CD14-positive monocyte (primary cell): ENCODE measurements at regions of chr12 and their contacts with region 1.

Region 1: DNA sequence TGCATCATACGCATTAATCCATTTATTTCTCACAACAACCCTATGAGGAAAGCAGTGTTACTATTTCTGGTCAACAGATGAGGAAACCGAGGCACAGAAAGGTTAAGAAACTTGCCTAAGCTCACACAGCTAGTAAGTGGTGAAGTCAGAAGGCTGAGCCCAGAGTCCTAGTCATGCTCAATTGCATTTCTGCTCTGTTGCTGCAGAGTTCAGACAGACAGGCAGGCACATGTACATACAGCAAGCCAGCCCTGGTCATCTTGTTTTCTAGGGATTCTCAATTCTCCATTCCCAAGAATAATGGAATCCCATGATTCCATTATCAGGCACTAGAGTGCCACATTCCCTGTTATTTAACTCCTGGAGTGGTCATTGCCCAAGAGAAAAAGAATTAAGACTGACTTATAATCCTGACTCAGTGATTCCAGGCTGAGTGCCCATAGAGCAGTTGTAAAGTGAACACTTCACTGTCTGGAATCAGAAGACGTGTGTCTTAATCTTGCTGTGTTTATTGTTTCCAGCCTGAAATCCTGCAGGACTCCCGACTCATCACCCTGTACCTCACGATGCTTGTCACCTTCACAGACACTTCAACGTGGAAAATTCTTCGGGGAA is 10.7 kb downstream of the UBE3B start:
- DNase-seq: no peak
- H3K4me3 ChIP-seq: no peak overlapping the region
- H3K4me3 Mint-ChIP-seq: no peak overlapping the region
- H3K27ac ChIP-seq: no peak overlapping the region
- H3K27ac Mint-ChIP-seq: no peak overlapping the region
- H3K4me1 ChIP-seq: no peaks in the 10 kb centered on the region
- H3K4me1 Mint-ChIP-seq: no peaks in the 10 kb centered on the region
- H3K27me3 ChIP-seq: no peaks in the 10 kb centered on the region
- H3K27me3 Mint-ChIP-seq: peaks cover 0 to 2% (median 0%) of the 10 kb centered on the region in 3 donors
- CTCF ChIP-seq: no peak

Region 2: GRCh38 chr12:109573029-109573913 is 85.1 kb after region 1 on chr12 and contains the starts of genes MMAB and MVK:
- intact Hi-C with region 1: loop called in 1 of 2 experiments (anchors 10 kb)
- DNase-seq: peak; percentile 99 to 100 (median 99)
- H3K4me3 ChIP-seq: peak within 1 kb of the TSS; percentile 61 to 85 (median 83)
- H3K4me3 Mint-ChIP-seq: peak within 1 kb of the TSS; percentile 84 to 92
- H3K27ac ChIP-seq: peak within 1 kb of the TSS; percentile 74 to 87
- H3K27ac Mint-ChIP-seq: peak within 1 kb of the TSS; percentile 89 to 98 (median 97)
- H3K4me1 ChIP-seq: peaks cover 14 to 20% of the 10 kb centered on the region in 2 donors
- H3K4me1 Mint-ChIP-seq: peaks cover 16% of the 10 kb centered on the region
- H3K27me3 ChIP-seq: no peaks in the 10 kb centered on the region
- H3K27me3 Mint-ChIP-seq: no peaks in the 10 kb centered on the region
- CTCF ChIP-seq: no peak
- polyA plus RNA-seq, gene MMAB: 5.0 to 15.6 (median 12.4) TPM
- polyA plus RNA-seq, gene MVK: 1.1 to 3.8 (median 1.6) TPM

Region 3: DNA sequence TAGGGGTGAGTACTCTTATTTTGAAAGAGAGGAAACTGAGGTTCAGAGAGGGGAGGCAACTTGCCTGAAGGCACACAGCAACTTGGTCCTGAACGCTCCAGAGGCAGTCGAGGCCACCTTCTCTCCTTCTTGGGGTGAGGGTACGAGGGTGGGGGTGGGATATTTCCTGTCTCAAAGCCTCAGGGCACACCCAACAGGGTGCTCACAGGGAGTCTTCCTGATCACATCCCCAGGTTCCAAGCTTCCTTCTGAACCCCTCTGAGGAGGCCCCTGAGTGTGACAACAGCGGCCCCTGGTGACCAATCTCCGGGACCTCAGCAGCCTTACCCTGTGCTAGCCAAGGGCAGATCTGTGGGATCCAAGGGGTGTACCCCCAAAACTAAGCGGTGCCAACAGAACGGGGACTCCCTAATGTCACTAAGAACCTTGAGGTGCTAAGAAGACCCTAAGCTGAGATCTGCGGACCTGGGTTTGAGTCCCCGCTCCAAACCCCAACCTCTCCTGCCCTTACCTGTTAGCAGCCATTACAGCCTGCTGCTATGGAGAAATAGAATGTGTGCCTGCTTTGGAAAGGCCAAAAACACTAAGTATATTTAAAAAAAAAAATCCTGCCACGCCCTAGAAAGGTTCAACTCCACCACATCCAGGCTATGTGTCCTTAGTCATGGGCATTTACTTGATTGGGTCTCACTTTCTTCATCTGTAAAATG is 287.2 kb after region 1 on chr12:
- intact Hi-C with region 1: no loop called
- DNase-seq: peak; percentile 47 to 61 (median 59)
- H3K4me3 ChIP-seq: no peak overlapping the region
- H3K4me3 Mint-ChIP-seq: no peak overlapping the region
- H3K27ac ChIP-seq: no peak overlapping the region
- H3K27ac Mint-ChIP-seq: no peak overlapping the region
- H3K4me1 ChIP-seq: no peaks in the 10 kb centered on the region
- H3K4me1 Mint-ChIP-seq: peaks cover 16% of the 10 kb centered on the region
- H3K27me3 ChIP-seq: no peaks in the 10 kb centered on the region
- H3K27me3 Mint-ChIP-seq: peaks cover 0 to 8% (median 7%) of the 10 kb centered on the region in 3 donors
- CTCF ChIP-seq: peak; percentile 87

Region 4: DNA sequence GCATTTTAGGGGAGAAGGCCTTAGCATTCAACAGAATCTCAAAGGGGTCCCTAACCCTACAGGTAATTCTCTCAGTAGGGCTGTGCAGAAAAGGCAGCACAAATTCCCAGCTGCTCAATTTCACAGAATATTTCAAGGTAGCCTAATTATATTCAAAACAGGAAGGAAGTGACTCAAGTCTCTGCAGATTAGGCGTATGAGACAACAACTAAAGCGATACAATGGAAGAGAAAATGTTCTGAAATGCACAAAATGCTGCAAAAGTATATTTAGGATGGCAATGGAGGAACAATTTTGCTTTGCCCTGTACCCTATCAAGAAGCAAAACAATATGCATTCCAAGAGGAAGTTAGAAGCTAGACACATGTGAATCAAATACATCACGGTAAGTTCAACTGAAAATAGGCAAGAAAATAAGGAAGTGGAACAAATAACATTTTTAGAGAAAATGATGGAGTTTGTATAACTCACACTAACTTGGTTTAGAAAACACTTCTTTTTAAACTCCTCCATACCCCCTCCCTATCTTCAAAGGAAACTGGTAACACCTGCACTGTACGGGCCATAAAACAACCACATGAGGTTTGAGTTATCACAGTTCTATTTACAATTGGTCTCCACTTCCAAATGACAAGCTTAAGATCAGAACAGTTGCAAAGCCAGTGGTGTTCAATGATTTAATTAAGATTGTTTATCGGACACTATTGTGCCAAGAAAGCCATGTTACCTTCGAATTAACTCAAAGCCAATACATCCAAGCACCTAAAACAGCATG is 506.4 kb after region 1 on chr12:
- intact Hi-C with region 1: no loop called
- DNase-seq: peak; percentile 37 to 61 (median 53)
- H3K4me3 ChIP-seq: peak overlapping the region; percentile 66 to 94 (median 73)
- H3K4me3 Mint-ChIP-seq: peak overlapping the region; percentile 97 to 99
- H3K27ac ChIP-seq: peak overlapping the region in 1 of 2 donors; percentile 96
- H3K27ac Mint-ChIP-seq: peak overlapping the region; percentile 97 to 99 (median 98)
- H3K4me1 ChIP-seq: peaks cover 44 to 50% of the 10 kb centered on the region in 2 donors
- H3K4me1 Mint-ChIP-seq: peaks cover 47% of the 10 kb centered on the region
- H3K27me3 ChIP-seq: no peaks in the 10 kb centered on the region
- H3K27me3 Mint-ChIP-seq: no peaks in the 10 kb centered on the region
- CTCF ChIP-seq: no peak